Activated CD4-positive, alpha-beta memory T cell treated with anti-CD3 and anti-CD28 coated beads, Interleukin-2, amount 10 ng/mL, durations not matched to agents 7 days and 5 days (primary cell): ENCODE measurements at regions of chr20 and their contacts with region 1.

Region 1: GRCh38 chr20:31698803-31699718 is 23.6 kb downstream of the BCL2L1 start:
- DNase-seq: peak; percentile 49
- H3K4me3 Mint-ChIP-seq: peak overlapping the region; percentile 33
- H3K27ac Mint-ChIP-seq: peak overlapping the region; percentile 83
- H3K4me1 Mint-ChIP-seq: peaks cover 68% of the 10 kb centered on the region
- H3K27me3 Mint-ChIP-seq: no peaks in the 10 kb centered on the region

Region 2: GRCh38 chr20:31674895-31675827 is 23.9 kb before region 1 on chr20:
- CTCF ChIA-PET with region 1: interaction called, 23 read pairs
- POLR2A ChIA-PET with region 1: interaction called, 62 read pairs
- DNase-seq: peak; percentile 84
- H3K4me3 Mint-ChIP-seq: peak overlapping the region; percentile 76
- H3K27ac Mint-ChIP-seq: peak overlapping the region; percentile 93
- H3K4me1 Mint-ChIP-seq: peaks cover 86% of the 10 kb centered on the region
- H3K27me3 Mint-ChIP-seq: no peaks in the 10 kb centered on the region

Region 3: DNA sequence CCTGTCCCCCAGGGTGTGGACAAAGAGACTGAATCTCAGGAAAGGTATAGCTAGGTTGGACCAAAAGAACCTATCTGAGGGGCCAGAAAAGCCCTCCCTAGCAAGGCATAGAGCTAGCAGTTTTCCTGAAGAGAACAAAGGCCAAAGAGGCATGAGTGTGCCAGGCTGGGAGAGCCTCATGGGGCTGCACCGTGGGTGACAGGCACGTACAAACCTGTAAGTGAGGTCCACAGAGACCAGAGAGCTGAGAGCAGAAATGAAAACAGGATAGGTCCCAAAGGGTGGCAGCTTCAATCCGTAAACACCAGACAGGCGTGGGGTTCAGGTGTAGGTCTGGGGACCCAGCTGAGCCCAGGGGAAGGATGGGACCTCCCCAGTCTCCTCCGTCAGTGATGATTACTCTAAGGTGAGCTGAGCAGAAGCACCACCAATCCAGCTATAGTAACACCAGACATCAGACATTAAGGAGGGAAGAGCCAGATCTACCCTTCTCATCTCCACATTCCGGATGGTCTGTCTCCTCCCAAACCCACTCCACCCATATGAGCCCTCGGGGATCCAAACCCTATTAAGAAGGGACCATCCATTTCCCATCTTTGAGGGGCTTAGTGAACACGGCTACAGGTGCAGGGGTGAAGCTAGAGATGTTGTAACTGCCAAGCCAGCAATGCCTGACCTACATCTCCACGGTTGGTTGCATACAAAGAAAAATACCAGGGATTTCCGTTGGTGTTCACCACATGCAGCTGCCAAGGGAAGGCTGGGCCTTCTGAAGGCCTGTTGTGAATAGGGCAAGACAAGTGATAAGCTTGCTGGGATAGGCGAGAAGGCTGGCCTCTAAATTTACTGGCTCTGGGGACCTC is 14.7 kb before region 1 on chr20:
- CTCF ChIA-PET with region 1: interaction called, 3 read pairs
- POLR2A ChIA-PET with region 1: interaction called, 16 read pairs
- DNase-seq: peak; percentile 45
- H3K4me3 Mint-ChIP-seq: no peak overlapping the region
- H3K27ac Mint-ChIP-seq: peak overlapping the region; percentile 69
- H3K4me1 Mint-ChIP-seq: peaks cover 85% of the 10 kb centered on the region
- H3K27me3 Mint-ChIP-seq: no peaks in the 10 kb centered on the region

Region 4: GRCh38 chr20:31712564-31713311 is 13.7 kb after region 1 on chr20:
- CTCF ChIA-PET with region 1: interaction called, 6 read pairs
- POLR2A ChIA-PET with region 1: interaction called, 11 read pairs
- DNase-seq: no peak
- H3K4me3 Mint-ChIP-seq: no peak overlapping the region
- H3K27ac Mint-ChIP-seq: peak overlapping the region; percentile 34
- H3K4me1 Mint-ChIP-seq: peaks cover 92% of the 10 kb centered on the region
- H3K27me3 Mint-ChIP-seq: no peaks in the 10 kb centered on the region